ENCODE measurements at regions of chr10 and their contacts with region 1.

Region 1: GRCh38 chr10:92689663-92690210 is at the start of gene HHEX:
- DNase-seq: peak; percentile 78
- ATAC-seq: peak; percentile 88
- H3K4me3 ChIP-seq: peak within 1 kb of the TSS; percentile 86
- H3K27ac ChIP-seq: no peak within 1 kb of the TSS
- H3K4me1 ChIP-seq: peaks cover 10% of the 10 kb centered on the region; the same call in 1 of the 2 replicates
- H3K27me3 ChIP-seq: no peaks in the 10 kb centered on the region
- CTCF ChIP-seq: no peak
- total RNA-seq, gene HHEX: 2.2 and 3.2 TPM in 2 replicates

Region 2: GRCh38 chr10:92527716-92528115 is 162.0 kb before region 1 on chr10:
- CTCF ChIA-PET with region 1: no interaction called
- POLR2A ChIA-PET with region 1: no interaction called
- intact Hi-C with region 1: no loop called
- DNase-seq: no peak
- ATAC-seq: no peak
- H3K4me3 ChIP-seq: no peak overlapping the region
- H3K27ac ChIP-seq: no peak overlapping the region
- H3K4me1 ChIP-seq: no peaks in the 10 kb centered on the region
- H3K27me3 ChIP-seq: no peaks in the 10 kb centered on the region
- CTCF ChIP-seq: no peak

Region 3: DNA sequence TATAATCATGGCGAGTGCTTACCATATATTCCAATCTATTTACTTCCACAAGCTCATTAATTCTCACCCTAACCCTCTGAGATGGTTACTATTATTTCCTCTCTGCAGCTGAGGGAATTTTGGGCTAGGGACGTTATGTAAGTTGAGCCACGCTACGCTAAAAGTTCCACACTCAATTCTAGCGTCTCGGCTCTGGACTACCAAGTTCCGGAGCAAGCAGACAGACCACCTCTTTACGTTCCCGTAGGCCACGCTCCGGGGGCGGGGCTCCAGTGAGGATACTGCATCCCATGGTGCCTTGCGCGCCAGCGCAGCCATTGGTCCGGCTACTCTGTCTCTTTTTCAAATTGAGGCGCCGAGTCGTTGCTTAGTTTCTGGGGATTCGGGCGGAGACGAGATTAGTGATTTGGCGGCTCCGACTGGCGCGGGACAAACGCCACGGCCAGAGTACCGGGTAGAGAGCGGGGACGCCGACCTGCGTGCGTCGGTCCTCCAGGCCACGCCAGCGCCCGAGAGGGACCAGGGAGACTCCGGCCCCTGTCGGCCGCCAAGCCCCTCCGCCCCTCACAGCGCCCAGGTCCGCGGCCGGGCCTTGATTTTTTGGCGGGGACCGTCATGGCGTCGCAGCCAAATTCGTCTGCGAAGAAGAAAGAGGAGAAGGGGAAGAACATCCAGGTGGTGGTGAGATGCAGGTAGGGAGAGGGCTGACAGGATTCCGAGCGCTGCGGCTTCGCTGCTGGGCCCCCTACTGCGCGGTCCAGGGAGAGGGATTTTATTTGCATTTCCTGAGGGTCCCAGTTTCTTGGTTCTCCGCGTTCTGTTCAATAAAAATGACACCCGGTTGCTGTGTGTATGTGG is 96.7 kb before region 1 on chr10 and contains the start of gene KIF11:
- CTCF ChIA-PET with region 1: no interaction called
- POLR2A ChIA-PET with region 1: no interaction called
- intact Hi-C with region 1: loop called (anchors 5 kb)
- DNase-seq: peak; percentile 93
- ATAC-seq: peak; percentile 76
- H3K4me3 ChIP-seq: peak within 1 kb of the TSS; percentile 90
- H3K27ac ChIP-seq: peak within 1 kb of the TSS; percentile 95
- H3K4me1 ChIP-seq: peaks cover 25% of the 10 kb centered on the region
- H3K27me3 ChIP-seq: no peaks in the 10 kb centered on the region
- CTCF ChIP-seq: no peak
- total RNA-seq, gene KIF11: 25.5 and 26.2 TPM in 2 replicates

Region 4: GRCh38 chr10:92816091-92816531 is 126.4 kb after region 1 on chr10:
- CTCF ChIA-PET with region 1: no interaction called
- POLR2A ChIA-PET with region 1: interaction called, 19 read pairs
- intact Hi-C with region 1: no loop called
- DNase-seq: peak; percentile 26
- ATAC-seq: peak; percentile 11; the same call in 1 of the 2 replicates
- H3K4me3 ChIP-seq: no peak overlapping the region
- H3K27ac ChIP-seq: peak overlapping the region; percentile 37; the same call in 1 of the 2 replicates
- H3K4me1 ChIP-seq: no peaks in the 10 kb centered on the region
- H3K27me3 ChIP-seq: no peaks in the 10 kb centered on the region
- CTCF ChIP-seq: no peak

Region 5: DNA sequence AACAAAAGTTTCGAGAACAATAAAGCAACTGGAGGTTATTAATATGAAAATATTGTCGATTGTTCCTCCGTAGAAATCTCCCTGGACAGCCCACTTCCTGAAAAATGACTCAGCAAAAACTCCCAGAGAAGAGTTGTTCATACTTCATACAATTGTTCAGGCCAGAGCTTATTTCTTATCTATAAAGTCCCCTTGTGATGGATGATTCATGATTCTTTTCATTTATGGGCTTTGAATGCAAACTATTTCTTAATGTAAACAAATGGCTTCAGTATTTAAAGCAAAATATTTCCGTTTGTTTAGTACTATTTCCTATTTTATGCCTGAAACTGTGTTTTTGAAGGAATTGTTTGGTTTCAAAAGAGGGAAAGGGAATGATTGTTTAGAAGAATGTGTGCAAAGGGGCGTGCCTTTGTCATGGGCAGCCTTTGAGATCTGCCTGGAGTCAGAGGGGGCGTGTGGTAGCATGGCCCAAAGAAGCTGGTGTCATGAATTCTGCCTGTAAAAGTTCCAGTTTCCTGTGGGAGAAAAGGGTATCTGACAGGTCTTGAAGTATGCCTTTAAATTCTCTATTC is 132.4 kb after region 1 on chr10:
- CTCF ChIA-PET with region 1: no interaction called
- POLR2A ChIA-PET with region 1: interaction called, 7 read pairs
- intact Hi-C with region 1: loop called (anchors 1 kb)
- DNase-seq: peak; percentile 85
- ATAC-seq: peak; percentile 88
- H3K4me3 ChIP-seq: peak overlapping the region; percentile 41
- H3K27ac ChIP-seq: peak overlapping the region; percentile 92
- H3K4me1 ChIP-seq: peaks cover 17% of the 10 kb centered on the region
- H3K27me3 ChIP-seq: no peaks in the 10 kb centered on the region
- CTCF ChIP-seq: no peak

Region 6: GRCh38 chr10:92873029-92873428 is 183.3 kb after region 1 on chr10:
- CTCF ChIA-PET with region 1: no interaction called
- POLR2A ChIA-PET with region 1: no interaction called
- intact Hi-C with region 1: loop called (anchors 10 kb)
- DNase-seq: no peak
- ATAC-seq: no peak
- H3K4me3 ChIP-seq: no peak overlapping the region
- H3K27ac ChIP-seq: no peak overlapping the region
- H3K4me1 ChIP-seq: peaks cover 2% of the 10 kb centered on the region; the same call in 1 of the 2 replicates
- H3K27me3 ChIP-seq: no peaks in the 10 kb centered on the region
- CTCF ChIP-seq: no peak

Measured in PC-3 (cell line).